MCF 10A (cell line): ENCODE measurements at regions of chr7 and their contacts with region 1.

Region 1: DNA sequence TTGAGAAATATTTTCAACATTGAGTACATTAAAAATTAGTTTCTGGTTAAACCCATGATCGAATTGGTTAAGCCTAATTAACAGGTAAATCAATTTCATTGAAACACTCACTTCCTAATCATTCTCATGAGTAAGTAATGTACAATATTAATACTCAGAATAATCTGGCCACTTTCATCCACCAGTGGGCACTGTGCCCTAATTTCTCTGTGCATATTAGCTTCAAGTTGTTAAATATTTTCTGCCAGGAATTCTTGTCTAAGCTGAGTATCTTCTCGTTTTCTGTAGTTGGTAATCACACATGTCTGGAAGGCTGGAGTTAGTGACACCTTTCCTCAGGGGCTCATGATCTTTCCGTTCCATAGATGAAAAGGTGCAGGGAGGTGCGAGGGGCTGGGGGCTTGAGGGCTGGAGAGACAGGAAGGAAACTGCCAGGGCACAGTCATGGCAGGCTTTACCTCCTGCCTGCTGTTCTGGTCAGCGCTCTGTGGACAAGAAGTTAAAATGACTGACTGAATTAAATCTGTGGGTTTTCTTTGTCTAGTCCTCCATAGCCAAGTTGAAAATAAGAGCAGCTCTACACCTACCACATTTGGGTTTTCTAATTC is 71.9 kb downstream of the WIPF3 start:
- DNase-seq: peak; percentile 59
- H3K4me3 Mint-ChIP-seq: no peak overlapping the region
- H3K27ac Mint-ChIP-seq: no peak overlapping the region
- H3K4me1 Mint-ChIP-seq: no peaks in the 10 kb centered on the region
- H3K27me3 Mint-ChIP-seq: peaks cover 13% of the 10 kb centered on the region
- CTCF ChIP-seq: peak; percentile 57

Region 2: GRCh38 chr7:28879105-28879504 is 999.1 kb before region 1 on chr7:
- CTCF ChIA-PET with region 1: no interaction called
- POLR2A ChIA-PET with region 1: no interaction called
- intact Hi-C with region 1: no loop called
- DNase-seq: no peak
- H3K4me3 Mint-ChIP-seq: no peak overlapping the region
- H3K27ac Mint-ChIP-seq: no peak overlapping the region
- H3K4me1 Mint-ChIP-seq: no peaks in the 10 kb centered on the region
- H3K27me3 Mint-ChIP-seq: peaks cover 11% of the 10 kb centered on the region
- CTCF ChIP-seq: no peak

Region 3: GRCh38 chr7:29606287-29606721 is 271.9 kb before region 1 on chr7:
- CTCF ChIA-PET with region 1: no interaction called
- POLR2A ChIA-PET with region 1: no interaction called
- intact Hi-C with region 1: no loop called
- DNase-seq: peak; percentile 68
- H3K4me3 Mint-ChIP-seq: peak overlapping the region; percentile 15
- H3K27ac Mint-ChIP-seq: peak overlapping the region; percentile 75
- H3K4me1 Mint-ChIP-seq: peaks cover 31% of the 10 kb centered on the region
- H3K27me3 Mint-ChIP-seq: no peaks in the 10 kb centered on the region
- CTCF ChIP-seq: no peak

Region 4: GRCh38 chr7:29995652-29996051 is 117.5 kb after region 1 on chr7:
- CTCF ChIA-PET with region 1: no interaction called
- POLR2A ChIA-PET with region 1: no interaction called
- intact Hi-C with region 1: no loop called
- DNase-seq: no peak
- H3K4me3 Mint-ChIP-seq: no peak overlapping the region
- H3K27ac Mint-ChIP-seq: no peak overlapping the region
- H3K4me1 Mint-ChIP-seq: no peaks in the 10 kb centered on the region
- H3K27me3 Mint-ChIP-seq: no peaks in the 10 kb centered on the region
- CTCF ChIP-seq: no peak

Region 5: GRCh38 chr7:30074422-30075030 is 196.3 kb after region 1 on chr7:
- CTCF ChIA-PET with region 1: interaction called, 13 read pairs
- POLR2A ChIA-PET with region 1: no interaction called
- intact Hi-C with region 1: no loop called
- DNase-seq: peak; percentile 59
- H3K4me3 Mint-ChIP-seq: no peak overlapping the region
- H3K27ac Mint-ChIP-seq: no peak overlapping the region
- H3K4me1 Mint-ChIP-seq: peaks cover 6% of the 10 kb centered on the region
- H3K27me3 Mint-ChIP-seq: no peaks in the 10 kb centered on the region
- CTCF ChIP-seq: peak; percentile 40

Region 6: DNA sequence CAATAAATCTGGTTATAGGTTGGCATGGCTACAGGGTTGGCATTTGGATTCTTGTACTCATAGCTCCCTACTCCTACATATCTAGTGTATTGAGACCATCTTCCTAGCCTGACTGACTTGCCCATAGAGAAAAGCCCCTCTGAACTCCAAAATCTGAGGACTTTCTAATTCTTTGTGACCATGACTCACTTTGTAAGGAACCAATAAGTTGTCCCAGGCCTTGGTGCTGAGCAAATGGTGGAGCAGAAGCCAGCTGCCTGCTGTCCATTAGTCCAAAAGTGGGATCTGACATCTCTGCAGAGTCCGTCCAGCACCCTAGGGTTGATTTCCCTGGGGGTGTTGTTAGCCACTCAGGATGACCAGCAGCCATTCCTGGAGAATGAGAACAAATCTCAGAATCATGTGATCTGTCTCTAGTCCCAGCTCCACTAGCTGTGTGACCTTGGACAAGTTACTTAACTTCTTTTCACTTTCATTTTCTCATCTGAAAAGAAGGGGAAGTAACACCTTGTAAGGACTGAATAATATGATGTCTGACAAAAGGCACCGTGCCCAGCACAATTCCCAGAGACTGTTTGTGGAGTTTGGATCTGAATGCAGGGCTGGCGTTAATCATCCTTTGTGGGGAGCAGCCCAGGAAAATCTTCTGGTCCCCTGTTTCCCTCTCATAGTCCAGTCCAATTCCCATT is 300.7 kb after region 1 on chr7:
- CTCF ChIA-PET with region 1: no interaction called
- POLR2A ChIA-PET with region 1: no interaction called
- intact Hi-C with region 1: no loop called
- DNase-seq: no peak
- H3K4me3 Mint-ChIP-seq: no peak overlapping the region
- H3K27ac Mint-ChIP-seq: no peak overlapping the region
- H3K4me1 Mint-ChIP-seq: no peaks in the 10 kb centered on the region
- H3K27me3 Mint-ChIP-seq: no peaks in the 10 kb centered on the region
- CTCF ChIP-seq: no peak

Region 7: DNA sequence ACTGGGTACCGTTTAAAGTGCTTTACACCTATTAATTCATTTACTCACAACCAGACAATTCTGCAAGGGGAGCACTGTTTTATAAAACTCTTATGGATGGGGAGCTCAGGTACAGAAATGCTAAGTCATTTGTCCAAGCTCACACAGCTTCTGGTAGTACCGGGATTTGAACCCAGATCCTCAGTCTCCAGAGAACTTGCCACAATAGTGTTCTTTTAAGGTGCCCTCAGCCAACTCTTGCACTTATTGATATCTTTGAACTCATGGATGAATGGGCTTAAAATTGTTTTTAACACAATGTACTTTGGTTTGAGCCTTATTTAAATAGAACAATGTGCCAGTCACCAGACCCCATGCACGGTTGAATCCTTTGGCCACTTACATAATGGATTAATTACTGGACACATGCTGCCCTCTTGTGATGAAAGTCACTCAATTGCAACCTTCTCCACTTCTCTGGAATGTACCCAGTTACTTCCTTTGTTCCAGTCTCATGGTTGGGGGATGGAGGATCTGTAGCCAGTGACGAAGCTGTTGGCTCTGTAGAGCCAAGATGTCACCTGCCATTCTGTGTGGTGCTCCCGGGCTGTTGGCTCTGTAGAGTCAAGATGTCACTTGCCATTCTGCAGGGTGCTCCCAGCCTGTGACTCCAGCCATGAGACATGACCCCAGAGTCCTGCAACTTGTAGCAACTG is 534.8 kb after region 1 on chr7:
- CTCF ChIA-PET with region 1: no interaction called
- POLR2A ChIA-PET with region 1: no interaction called
- intact Hi-C with region 1: loop called (anchors 5 kb)
- DNase-seq: peak; percentile 90
- H3K4me3 Mint-ChIP-seq: no peak overlapping the region
- H3K27ac Mint-ChIP-seq: no peak overlapping the region
- H3K4me1 Mint-ChIP-seq: peaks cover 10% of the 10 kb centered on the region
- H3K27me3 Mint-ChIP-seq: no peaks in the 10 kb centered on the region
- CTCF ChIP-seq: peak; percentile 54